Calu3 (cell line): ENCODE measurements at regions of chr6 and their contacts with region 1.

Region 1: DNA sequence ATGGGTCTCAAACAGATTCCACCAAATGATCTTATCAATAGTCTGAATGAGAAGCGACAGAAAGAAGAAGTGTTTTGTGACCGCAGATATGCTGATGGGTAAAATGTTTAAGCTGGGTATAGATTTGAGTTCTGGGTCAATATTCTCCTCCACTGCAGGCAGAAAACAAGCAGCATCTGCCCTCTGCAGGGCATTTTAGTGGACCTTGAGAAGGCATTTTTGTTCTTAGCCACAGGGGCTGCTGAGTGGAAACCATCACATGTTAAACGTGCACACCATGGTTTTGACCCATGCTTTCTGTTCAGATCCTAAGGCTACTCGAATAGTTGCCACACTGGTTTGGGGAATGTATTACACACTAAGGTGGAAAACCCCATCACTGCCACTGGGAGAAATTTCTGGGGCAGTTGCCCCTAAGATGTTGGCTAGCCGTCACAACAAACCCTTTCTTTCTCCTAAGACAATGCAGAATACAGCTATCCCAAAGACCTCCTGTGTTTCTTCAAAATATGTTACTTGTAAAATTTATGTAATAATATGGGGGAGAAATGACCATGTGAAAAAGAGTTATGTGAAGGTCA is 5.5 kb downstream of the POU3F2 start:
- DNase-seq: no peak
- H3K4me3 Mint-ChIP-seq: no peak overlapping the region
- H3K27ac Mint-ChIP-seq: no peak overlapping the region
- H3K4me1 Mint-ChIP-seq: peaks cover 20% of the 10 kb centered on the region
- H3K27me3 Mint-ChIP-seq: peaks cover 92% of the 10 kb centered on the region
- CTCF ChIP-seq: no peak

Region 2: GRCh38 chr6:97068211-97068610 is 1771.7 kb before region 1 on chr6:
- CTCF ChIA-PET with region 1: no interaction called
- intact Hi-C with region 1: loop called (anchors 5 kb)
- DNase-seq: peak; percentile 32
- H3K4me3 Mint-ChIP-seq: no peak overlapping the region
- H3K27ac Mint-ChIP-seq: no peak overlapping the region
- H3K4me1 Mint-ChIP-seq: no peaks in the 10 kb centered on the region
- H3K27me3 Mint-ChIP-seq: no peaks in the 10 kb centered on the region
- CTCF ChIP-seq: peak; percentile 40

Region 3: DNA sequence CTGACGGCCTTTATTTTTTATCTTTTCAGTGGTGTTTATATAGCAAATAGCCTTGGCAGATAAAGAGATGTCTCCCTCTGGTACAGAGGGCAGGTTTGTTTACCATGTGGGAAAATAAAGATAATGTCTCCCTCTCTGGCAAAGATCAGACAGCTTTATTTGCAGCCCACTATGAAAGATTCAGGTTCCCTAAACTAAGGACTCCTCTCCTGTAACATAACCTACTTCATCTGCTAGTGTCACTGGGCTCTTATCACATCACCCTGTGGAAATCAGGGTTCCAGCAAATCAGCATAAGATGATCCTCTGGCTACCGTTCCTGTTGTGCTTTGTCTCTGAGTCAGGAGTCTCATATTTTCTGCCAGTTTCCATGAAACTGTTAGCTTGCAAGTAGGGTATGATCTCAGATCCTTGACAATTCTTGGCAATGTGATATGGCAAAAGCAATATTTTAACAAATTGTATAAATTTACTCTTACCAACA is 104.8 kb after region 1 on chr6:
- CTCF ChIA-PET with region 1: no interaction called
- intact Hi-C with region 1: no loop called
- DNase-seq: no peak
- H3K4me3 Mint-ChIP-seq: no peak overlapping the region
- H3K27ac Mint-ChIP-seq: no peak overlapping the region
- H3K4me1 Mint-ChIP-seq: peaks cover 32% of the 10 kb centered on the region
- H3K27me3 Mint-ChIP-seq: no peaks in the 10 kb centered on the region
- CTCF ChIP-seq: no peak